ENCODE measurements at regions of chr2 and their contacts with region 1.

Region 1: DNA sequence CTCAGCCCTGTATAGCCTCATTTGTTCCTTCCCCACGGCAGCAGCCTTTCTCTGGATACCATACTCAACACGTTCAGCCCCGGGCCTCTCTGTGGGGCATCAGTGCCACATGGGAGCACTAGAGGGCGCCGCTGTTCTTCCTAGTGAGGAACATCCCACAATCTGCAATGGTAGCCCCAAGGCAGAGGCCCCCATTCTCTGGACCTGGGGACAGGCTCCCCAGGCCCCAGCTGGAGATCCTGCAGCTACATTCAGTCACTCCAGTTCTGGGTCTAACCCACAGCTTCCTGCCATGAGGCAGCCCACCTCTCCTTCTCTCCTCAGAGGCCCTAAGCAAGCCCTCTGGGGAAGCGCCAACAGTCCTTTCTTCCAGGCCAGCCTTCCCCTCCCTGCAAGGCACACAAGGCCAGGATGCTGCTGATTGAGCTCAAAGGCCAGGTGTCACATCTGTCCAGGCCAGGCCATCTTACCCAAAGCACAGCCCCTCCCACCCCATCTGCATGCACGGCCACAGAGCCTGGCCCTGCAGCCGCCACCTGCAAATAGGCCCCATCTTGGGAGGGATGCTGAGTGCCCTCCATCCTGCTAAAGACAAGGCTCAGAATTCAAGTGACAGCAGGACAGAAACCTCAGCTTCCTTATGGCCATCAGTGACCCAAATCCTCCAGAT is 14.3 kb upstream of the SFXN5 start:
- DNase-seq: peak; percentile 69 to 86 (median 82)
- H3K4me3 ChIP-seq: no peak overlapping the region
- H3K27ac ChIP-seq: no peak overlapping the region
- H3K4me1 ChIP-seq: peaks cover 0 to 22% (median 20%) of the 10 kb centered on the region in 4 experiments
- H3K27me3 ChIP-seq: no peaks in the 10 kb centered on the region

Region 2: GRCh38 chr2:73072134-73072405 is 13.8 kb before region 1 on chr2:
- CTCF ChIA-PET with region 1: interaction called, 18 read pairs
- POLR2A ChIA-PET with region 1: no interaction called
- DNase-seq: peak in 2 of 3 donors; percentile 32 to 45
- H3K4me3 ChIP-seq: peak overlapping the region; percentile 73 to 90 (median 89)
- H3K27ac ChIP-seq: peak overlapping the region in 1 of 2 experiments; percentile 84
- H3K4me1 ChIP-seq: peaks cover 14 to 34% (median 27%) of the 10 kb centered on the region in 4 experiments
- H3K27me3 ChIP-seq: no peaks in the 10 kb centered on the region

Region 3: DNA sequence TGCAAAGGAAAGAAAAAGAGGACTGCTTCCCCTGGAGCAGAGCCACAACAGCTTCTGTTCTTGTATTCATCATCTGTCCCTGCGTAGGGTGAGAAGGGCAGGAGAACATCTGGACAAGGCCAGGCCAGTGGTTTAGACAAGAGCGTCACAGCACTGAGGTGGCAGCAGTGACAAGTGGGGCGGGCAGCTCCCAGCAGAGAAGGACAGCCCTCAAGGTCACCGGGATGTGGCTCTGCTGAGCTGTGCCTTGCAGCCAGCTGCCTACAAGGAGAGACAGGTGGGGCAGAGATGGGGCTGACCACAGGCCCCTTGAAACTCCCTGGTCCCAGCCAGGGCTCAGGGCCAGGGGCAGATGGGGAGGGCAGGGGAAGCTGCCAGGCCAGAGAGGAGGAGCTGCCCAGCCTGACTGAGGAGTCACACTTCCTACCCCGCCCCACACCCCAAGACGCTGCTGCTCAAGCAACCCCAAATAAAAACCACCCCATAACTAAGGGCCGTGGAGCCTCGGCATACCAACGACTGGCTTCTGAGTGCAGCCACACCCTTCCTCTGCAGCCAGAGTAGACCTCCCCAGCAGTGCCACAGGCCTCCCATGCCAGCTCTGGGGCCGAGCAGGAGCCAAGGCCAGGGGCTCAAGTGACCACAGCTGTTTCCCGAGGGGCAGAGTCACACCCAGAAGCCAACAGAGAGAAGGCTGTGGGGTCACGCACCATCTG is 21.5 kb after region 1 on chr2:
- CTCF ChIA-PET with region 1: interaction called, 14 read pairs
- POLR2A ChIA-PET with region 1: no interaction called
- DNase-seq: peak in 1 of 3 donors; percentile 12
- H3K4me3 ChIP-seq: no peak overlapping the region
- H3K27ac ChIP-seq: no peak overlapping the region
- H3K4me1 ChIP-seq: peaks cover 0 to 25% (median 21%) of the 10 kb centered on the region in 4 experiments
- H3K27me3 ChIP-seq: peaks cover 4 to 21% (median 20%) of the 10 kb centered on the region in 5 experiments

Region 4: GRCh38 chr2:73156539-73157124 is 70.8 kb after region 1 on chr2:
- CTCF ChIA-PET with region 1: interaction called, 78 read pairs
- POLR2A ChIA-PET with region 1: no interaction called
- DNase-seq: peak; percentile 62 to 76 (median 76)
- H3K4me3 ChIP-seq: peak overlapping the region in 1 of 7 experiments; percentile 48
- H3K27ac ChIP-seq: no peak overlapping the region
- H3K4me1 ChIP-seq: peaks cover 0 to 7% (median 2%) of the 10 kb centered on the region in 4 experiments
- H3K27me3 ChIP-seq: peaks cover 2 to 10% (median 8%) of the 10 kb centered on the region in 5 experiments

Region 5: GRCh38 chr2:73163483-73164367 is 77.9 kb after region 1 on chr2:
- CTCF ChIA-PET with region 1: interaction called, 78 read pairs
- POLR2A ChIA-PET with region 1: no interaction called
- DNase-seq: peak; percentile 64 to 81 (median 74)
- H3K4me3 ChIP-seq: no peak overlapping the region
- H3K27ac ChIP-seq: no peak overlapping the region
- H3K4me1 ChIP-seq: no peaks in the 10 kb centered on the region
- H3K27me3 ChIP-seq: no peaks in the 10 kb centered on the region

Region 6: DNA sequence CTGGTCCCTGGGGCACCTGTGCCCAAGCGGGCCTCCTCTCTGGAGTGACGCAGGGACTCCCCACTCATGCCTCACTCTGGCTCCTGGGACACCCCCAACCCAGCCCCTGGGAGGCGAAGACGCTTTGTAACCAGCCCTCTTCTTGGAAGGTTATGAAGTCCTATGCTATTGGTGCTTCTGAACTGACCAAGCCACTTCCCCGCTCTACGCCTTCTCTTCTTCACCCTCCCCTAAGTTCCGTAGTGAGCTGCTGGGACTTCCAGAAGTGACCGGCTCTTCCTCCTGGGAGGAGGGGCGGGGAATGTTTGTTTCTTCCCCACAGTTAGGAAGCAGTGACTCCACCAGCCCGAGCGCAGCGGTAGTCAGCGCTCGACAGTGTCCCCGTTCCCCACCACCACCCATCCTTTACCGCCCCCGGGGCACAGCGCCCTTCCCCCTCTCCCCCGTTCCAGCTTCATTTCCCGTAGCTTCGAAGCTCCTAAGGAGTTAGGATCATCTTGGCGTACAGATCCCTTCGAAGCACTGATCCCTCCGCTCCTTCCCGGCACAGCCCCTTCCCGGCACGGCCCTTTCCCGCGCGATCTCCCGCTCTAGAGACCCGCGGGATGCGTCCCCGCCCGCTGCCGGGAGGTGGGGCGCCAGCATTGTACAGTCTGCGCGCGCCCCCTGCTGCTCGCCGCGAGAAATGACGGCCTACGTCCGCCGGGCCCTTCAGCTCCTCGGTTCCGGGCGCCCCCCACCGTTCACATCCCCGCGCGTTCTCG is 91.2 kb after region 1 on chr2:
- CTCF ChIA-PET with region 1: interaction called, 43 read pairs
- POLR2A ChIA-PET with region 1: no interaction called
- DNase-seq: peak; percentile 82 to 87 (median 85)
- H3K4me3 ChIP-seq: peak overlapping the region; percentile 27 to 80 (median 59)
- H3K27ac ChIP-seq: no peak overlapping the region
- H3K4me1 ChIP-seq: peaks cover 0 to 32% (median 26%) of the 10 kb centered on the region in 4 experiments
- H3K27me3 ChIP-seq: peaks cover 0 to 37% (median 12%) of the 10 kb centered on the region in 5 experiments

Region 7: GRCh38 chr2:73212448-73213176 is 126.8 kb after region 1 on chr2:
- CTCF ChIA-PET with region 1: interaction called, 10 read pairs
- POLR2A ChIA-PET with region 1: no interaction called
- DNase-seq: peak; percentile 74 to 88 (median 82)
- H3K4me3 ChIP-seq: peak overlapping the region in 3 of 7 experiments; percentile 8 to 77 (median 8)
- H3K27ac ChIP-seq: no peak overlapping the region
- H3K4me1 ChIP-seq: peaks cover 5 to 28% (median 23%) of the 10 kb centered on the region in 4 experiments
- H3K27me3 ChIP-seq: peaks cover 0 to 3% (median 0%) of the 10 kb centered on the region in 5 experiments